PC-9 (cell line): ENCODE measurements at regions of chr6 and their contacts with region 1.

Region 1: GRCh38 chr6:38012573-38012972 is 193.0 kb downstream of the ZFAND3 start:
- DNase-seq: no peak
- H3K4me3 ChIP-seq: no peak overlapping the region
- H3K27ac ChIP-seq: no peak overlapping the region
- H3K4me1 ChIP-seq: no peaks in the 10 kb centered on the region
- H3K27me3 ChIP-seq: no peaks in the 10 kb centered on the region
- CTCF ChIP-seq: peak; percentile 82

Region 2: DNA sequence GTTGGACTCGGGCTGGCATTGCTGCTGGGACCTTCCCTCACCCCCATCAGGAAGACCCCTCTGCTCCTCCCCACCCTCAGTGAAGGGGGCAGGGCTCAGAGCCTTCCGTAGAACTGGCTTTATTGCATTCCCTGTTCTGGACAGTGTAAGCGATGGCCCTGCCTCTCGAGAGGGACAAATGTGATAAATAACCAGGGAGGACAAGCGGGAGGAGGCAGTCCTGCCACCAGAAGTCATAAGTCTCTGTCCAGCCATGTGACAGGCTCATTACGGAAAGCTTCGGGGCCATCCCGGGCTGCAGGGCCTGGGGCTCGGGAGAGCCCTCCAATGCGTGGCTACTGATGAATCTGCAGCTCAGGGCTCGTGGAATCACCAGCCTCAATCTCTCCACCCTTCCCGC is 256.4 kb before region 1 on chr6:
- CTCF ChIA-PET with region 1: no interaction called
- POLR2A ChIA-PET with region 1: no interaction called
- intact Hi-C with region 1: no loop called
- DNase-seq: no peak
- H3K4me3 ChIP-seq: no peak overlapping the region
- H3K27ac ChIP-seq: no peak overlapping the region
- H3K4me1 ChIP-seq: no peaks in the 10 kb centered on the region
- H3K27me3 ChIP-seq: no peaks in the 10 kb centered on the region; the same call in 1 of the 2 replicates
- CTCF ChIP-seq: no peak

Region 3: DNA sequence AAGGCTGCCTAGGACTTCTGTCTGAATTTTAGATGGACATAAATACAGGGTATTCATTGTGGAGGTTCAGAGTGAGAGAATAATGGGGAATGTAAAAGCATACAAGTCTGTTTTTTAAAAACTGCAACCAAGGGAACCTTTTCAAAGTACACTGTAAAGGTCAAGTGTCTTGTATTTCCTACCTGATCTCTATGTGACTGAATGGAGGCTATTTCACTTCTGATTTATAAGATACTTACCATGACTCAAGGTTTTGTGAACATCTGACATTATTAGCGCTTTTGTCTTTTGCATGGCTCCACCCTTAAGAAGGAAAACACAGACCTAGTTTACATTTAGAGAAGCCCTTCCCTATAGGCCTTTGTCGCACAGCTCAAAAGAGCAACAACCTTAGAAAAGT is 66.5 kb before region 1 on chr6:
- CTCF ChIA-PET with region 1: interaction called, 10 read pairs
- POLR2A ChIA-PET with region 1: no interaction called
- intact Hi-C with region 1: no loop called
- DNase-seq: no peak
- H3K4me3 ChIP-seq: no peak overlapping the region
- H3K27ac ChIP-seq: no peak overlapping the region
- H3K4me1 ChIP-seq: no peaks in the 10 kb centered on the region
- H3K27me3 ChIP-seq: no peaks in the 10 kb centered on the region
- CTCF ChIP-seq: no peak

Region 4: GRCh38 chr6:38508894-38509293 is 496.3 kb after region 1 on chr6:
- CTCF ChIA-PET with region 1: no interaction called
- POLR2A ChIA-PET with region 1: no interaction called
- intact Hi-C with region 1: no loop called
- DNase-seq: peak; percentile 5 to 89
- H3K4me3 ChIP-seq: no peak overlapping the region
- H3K27ac ChIP-seq: peak overlapping the region; percentile 66
- H3K4me1 ChIP-seq: peaks cover 28% of the 10 kb centered on the region
- H3K27me3 ChIP-seq: no peaks in the 10 kb centered on the region
- CTCF ChIP-seq: no peak